Left ventricle myocardium superior (tissue), 1 donor: ENCODE measurements at regions of chr10 and their contacts with region 1.

Region 1: DNA sequence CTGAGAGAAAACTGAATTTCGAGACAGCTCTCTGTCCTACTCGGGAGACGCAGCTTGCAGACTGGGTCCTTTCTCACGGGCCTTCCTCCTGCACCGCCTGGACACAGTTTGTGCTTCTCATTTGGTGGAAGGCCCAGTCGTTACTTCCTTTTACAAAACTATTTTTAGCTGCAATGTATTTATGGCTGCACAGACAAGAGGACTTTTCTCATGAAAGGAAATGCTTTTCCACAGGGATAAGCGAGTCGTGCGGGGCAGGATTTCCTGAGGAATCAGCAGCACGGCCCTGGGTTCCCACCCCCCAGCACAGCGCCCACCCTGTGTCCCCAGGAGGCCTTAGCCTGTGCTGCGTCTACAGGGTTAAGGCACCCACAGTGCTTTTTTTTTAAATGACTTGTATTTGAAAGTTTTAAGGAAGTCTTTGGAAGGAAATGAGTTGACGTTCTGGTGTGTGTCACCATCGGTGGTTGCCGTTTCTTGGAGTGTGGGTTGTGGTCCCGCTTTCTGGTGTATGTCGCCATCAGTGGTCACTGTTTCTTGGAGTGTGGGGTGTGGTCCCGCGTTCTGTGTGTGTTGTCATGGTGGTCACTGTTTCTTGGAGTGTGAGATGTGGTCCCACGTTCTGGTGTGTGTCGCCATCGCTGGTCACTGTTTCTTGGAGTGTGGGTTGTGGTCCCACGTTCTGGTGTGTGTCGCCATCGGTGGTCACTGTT is 50.9 kb downstream of the INPP5A start:
- DNase-seq: peak; percentile 66
- ATAC-seq: peak; percentile 62

Region 2: DNA sequence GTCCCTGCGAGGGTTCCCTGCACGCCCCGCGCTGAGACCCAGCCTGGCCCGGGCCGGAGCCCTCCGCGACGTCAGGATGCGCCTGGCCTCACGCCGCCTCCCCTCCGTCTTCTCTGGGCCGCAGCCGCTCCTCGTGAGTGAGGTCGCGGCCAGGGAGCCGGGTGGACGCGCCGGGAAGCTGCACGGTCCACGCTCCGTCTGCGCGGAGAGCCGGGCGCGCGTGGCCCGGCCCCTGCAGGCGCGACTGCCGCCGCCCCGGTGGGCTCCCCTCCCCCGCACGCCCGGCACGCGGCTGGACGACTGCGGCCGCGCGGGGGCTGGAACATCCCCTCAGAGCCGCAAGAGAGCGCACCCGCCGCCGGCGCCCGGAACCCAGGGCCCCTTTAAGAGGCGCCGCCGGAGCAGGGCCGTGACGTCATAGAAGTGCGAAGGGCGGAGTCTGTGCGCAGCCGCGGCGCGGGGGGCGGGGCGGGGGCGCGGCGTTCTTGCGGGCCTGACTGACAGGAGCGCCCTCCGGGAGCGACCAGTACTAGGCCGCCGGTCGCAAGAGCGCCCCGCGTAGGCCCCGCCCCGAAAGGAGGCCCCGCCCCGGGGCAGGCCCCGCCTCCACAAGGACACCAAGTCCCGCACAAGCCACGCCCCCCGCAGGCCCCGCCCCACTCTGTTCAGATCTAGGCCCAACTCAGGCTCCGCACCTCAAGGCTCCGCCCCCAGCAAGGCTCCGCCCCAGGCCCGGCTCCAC is 51.3 kb before region 1 on chr10:
- intact Hi-C with region 1: loop called (anchors 10 kb)
- DNase-seq: peak; percentile 100
- ATAC-seq: peak; percentile 92

Region 3: GRCh38 chr10:132637477-132638129 is 49.1 kb after region 1 on chr10:
- intact Hi-C with region 1: loop called (anchors 10 kb)
- DNase-seq: no peak
- ATAC-seq: peak; percentile 71

Region 4: DNA sequence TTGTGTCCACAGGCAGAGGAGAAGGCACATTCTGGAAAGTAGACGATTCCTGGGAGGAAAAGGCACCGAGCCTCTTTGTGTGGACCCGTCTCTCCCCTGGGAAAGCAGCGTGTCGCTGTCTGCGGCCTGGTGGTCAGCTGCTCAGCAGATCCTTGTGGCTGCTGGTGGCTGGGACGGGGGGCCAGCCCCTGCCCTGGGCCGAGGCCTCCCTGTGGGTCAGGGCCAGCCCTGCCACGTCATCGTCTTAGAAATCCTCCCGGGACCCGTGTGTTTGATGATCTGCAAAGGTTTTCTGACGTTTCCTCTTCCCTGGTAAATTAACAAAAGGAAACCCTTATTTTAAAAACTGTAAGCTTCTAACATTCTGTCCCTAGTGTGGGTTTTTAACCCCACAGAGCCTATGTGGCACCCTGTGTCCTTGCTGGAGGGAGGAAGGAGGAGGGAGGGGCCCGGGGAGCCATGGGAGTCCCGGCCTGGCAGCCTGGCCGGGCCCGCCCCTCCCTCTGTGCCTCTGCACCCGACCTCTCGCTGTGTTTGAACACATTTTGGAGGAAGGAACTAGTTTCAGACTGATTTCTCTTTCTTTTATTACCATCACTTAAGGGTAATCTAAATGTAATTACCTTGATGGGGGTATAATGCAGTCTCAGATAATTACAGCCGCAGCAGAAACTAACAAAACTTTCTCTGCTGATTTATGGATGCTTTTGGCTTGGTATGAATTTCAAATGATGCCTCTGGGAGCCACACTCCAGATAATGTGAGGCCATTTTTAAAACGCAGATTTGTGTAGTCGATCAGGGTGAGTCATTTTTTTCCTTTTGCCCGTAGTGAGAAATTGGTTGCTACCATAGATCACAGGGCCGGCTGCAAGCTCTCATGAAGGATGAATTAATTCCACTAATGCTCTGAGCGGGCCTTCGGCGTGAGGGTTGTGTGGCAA is 112.0 kb after region 1 on chr10:
- intact Hi-C with region 1: no loop called
- DNase-seq: peak; percentile 41
- ATAC-seq: peak; percentile 37